Vagina (tissue), 2 donors: ENCODE measurements at regions of chr1 and their contacts with region 1.

Region 1: DNA sequence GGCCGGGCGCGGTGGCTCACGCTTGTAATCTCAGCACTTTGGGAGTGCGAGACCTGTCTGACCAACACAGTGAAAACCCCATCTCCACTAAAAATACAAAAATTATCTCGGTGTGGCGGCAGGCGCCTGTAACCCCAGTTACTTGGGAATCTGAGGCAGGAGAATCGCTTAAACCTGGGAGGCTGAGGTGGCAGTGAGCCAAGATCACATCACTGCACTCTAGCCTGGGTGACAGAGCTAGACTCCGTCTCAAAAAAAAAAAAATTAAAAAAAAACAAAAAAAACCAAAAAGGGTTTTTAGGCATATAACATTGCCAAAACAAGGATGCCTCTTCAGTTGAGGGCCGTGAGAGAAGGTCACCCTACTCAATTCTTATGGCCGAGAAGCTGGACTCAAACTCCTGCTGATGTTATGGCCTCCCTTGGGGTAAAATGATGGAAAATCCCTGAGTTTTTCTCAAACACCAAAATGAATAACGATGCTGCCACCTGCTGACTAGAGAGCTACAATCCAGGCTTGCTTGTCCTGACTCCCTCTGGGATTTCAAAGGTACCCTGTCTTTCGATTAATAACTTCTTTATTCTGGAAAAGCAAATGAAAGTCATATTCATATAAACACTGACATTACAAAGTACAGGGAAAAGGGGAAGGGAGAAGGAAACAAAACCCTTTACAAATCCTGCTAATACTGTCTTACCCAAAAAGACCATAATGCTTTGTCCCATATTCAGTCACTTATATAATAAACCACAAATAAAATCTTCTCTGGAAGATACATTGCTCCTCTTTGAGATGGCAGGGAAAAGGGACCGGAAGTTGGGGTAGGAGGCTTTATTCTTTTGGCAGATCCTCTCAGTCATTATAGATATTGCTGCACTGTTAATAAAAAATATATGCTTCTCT is 10.7 kb downstream of the RAB42 start:
- DNase-seq: no peak
- H3K4me3 ChIP-seq: no peak overlapping the region
- H3K27ac ChIP-seq: peak overlapping the region; percentile 38
- H3K4me1 ChIP-seq: no peaks in the 10 kb centered on the region
- H3K27me3 ChIP-seq: no peaks in the 10 kb centered on the region
- CTCF ChIP-seq: peak; percentile 56 to 67 (median 64)
- POLR2A ChIP-seq: no peak

Region 2: GRCh38 chr1:28518000-28518744 is 84.6 kb before region 1 on chr1:
- intact Hi-C with region 1: loop called (anchors 5 kb)
- DNase-seq: peak in 1 of 2 donors; percentile 90
- H3K4me3 ChIP-seq: peak overlapping the region; percentile 51 to 81
- H3K27ac ChIP-seq: peak overlapping the region; percentile 75
- H3K4me1 ChIP-seq: peaks cover 21% of the 10 kb centered on the region
- H3K27me3 ChIP-seq: no peaks in the 10 kb centered on the region
- CTCF ChIP-seq: peak; percentile 91 to 100 (median 98)
- POLR2A ChIP-seq: no peak

Region 3: GRCh38 chr1:30213936-30214335 is 1611.1 kb after region 1 on chr1:
- intact Hi-C with region 1: loop called (anchors 5 kb)
- DNase-seq: no peak
- H3K4me3 ChIP-seq: no peak overlapping the region
- H3K27ac ChIP-seq: no peak overlapping the region
- H3K4me1 ChIP-seq: no peaks in the 10 kb centered on the region
- H3K27me3 ChIP-seq: no peaks in the 10 kb centered on the region
- CTCF ChIP-seq: no peak
- POLR2A ChIP-seq: no peak